ENCODE measurements at regions of chr3 and their contacts with region 1.

Region 1: DNA sequence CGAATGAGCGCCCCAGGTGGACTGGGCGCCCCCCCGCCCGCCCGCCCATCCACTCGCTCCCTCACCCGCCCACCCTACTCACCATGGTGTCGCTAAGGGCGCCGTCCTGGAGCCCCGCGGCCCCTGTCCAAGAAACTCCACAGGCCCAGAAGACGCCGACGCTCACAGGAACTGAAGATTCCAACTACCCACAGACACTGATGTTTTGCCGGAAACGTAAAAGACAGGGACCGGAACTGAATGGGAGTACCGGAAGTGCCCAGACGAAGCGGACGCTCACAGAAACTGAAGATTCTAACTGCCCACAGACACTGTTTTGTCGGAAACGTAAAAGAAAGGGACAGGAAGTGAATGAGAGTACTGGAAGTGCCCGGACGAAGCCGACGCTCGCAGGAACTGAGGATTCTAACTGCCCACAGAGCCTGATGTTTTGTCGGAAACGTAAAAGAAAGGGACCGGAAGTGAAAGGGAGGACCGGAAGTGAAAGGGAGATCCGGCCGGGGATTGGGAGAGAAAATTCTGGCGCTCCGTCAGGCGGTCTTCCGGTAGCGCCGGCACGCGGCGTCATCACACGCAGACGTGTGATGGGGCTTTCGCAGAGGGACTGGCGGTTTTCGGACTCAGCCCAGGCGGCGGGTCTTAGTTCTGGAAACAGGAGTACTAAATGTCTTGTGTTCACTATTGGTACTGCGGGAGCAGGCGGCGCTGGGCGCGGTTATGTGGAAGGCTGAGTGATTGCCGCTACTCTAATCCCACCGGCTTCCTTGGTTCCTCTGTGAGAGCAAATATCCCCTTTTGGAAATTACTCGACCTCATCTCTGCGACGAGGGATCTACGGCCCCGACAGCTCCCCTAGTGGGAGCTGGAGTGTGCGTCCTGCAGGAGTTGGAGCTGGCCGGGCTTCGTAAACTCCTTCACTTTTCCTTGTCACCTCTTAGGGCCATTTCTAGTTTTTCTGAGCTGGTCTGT is at the start of gene ISY1:
- DNase-seq: peak; percentile 93
- ATAC-seq: peak; percentile 81
- H3K4me3 Mint-ChIP-seq: peak within 1 kb of the TSS; percentile 93
- H3K27ac Mint-ChIP-seq: peak within 1 kb of the TSS; percentile 98
- H3K4me1 Mint-ChIP-seq: peaks cover 30% of the 10 kb centered on the region
- H3K27me3 Mint-ChIP-seq: no peaks in the 10 kb centered on the region
- total RNA-seq, gene ISY1: 44.9 to 65.5 TPM

Region 2: GRCh38 chr3:128993461-128994173 is 167.6 kb before region 1 on chr3 and contains the start of gene CFAP92:
- CTCF ChIA-PET with region 1: interaction called, 6 read pairs
- POLR2A ChIA-PET with region 1: interaction called, 8 read pairs
- intact Hi-C with region 1: loop called in 1 of 2 experiments (anchors 1 kb)
- DNase-seq: peak; percentile 95
- ATAC-seq: peak; percentile 97
- H3K4me3 Mint-ChIP-seq: peak within 1 kb of the TSS; percentile 63
- H3K27ac Mint-ChIP-seq: peak within 1 kb of the TSS; percentile 49
- H3K4me1 Mint-ChIP-seq: peaks cover 32% of the 10 kb centered on the region
- H3K27me3 Mint-ChIP-seq: no peaks in the 10 kb centered on the region
- total RNA-seq, gene CFAP92: 0.64 to 0.88 TPM

Region 3: DNA sequence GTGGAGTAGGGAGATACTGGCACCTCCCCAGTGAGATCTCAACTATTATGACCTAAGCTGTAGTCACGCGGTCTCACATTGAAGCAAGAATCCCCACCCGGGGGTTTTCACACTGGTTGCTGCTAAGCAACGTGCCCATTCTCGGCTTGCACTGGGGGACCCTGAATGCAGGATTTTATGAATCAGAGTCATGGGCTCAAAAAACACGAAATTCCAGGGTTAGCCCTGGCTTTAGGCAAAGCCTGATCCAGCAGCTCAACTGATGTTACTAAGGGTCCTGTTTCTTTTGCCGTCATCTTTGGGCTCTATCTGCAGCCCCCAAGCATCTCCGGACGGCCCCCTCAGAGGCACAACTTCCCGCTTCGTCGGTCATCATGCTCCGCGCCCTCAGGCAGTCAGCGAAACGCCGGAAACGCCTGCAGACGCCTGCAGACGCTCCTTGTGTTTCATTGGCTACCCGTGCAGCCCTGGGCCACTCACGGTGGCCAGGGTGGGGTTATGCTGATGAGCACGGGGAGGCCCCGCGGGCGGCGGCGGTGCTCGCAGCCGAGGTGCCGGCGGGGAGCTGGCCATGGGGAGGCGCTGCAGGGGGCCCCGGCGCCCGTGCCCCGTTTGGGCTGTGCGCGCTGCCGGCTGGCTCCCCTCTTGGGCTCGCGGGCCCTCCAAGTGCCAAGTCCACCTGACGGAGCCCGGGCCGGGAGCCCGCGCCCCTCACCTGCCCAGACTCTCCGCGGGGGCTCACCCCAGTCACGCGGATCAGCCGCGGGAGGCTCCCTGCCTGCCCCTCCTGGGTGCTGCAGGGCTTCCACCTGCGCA is 134.2 kb before region 1 on chr3:
- CTCF ChIA-PET with region 1: interaction called, 5 read pairs
- POLR2A ChIA-PET with region 1: interaction called, 6 read pairs
- intact Hi-C with region 1: loop called (anchors 1 kb)
- DNase-seq: peak; percentile 96
- ATAC-seq: peak; percentile 100
- H3K4me3 Mint-ChIP-seq: peak overlapping the region; percentile 72
- H3K27ac Mint-ChIP-seq: peak overlapping the region; percentile 81
- H3K4me1 Mint-ChIP-seq: peaks cover 12% of the 10 kb centered on the region
- H3K27me3 Mint-ChIP-seq: no peaks in the 10 kb centered on the region

Region 4: GRCh38 chr3:129132097-129132866 is 28.9 kb before region 1 on chr3:
- CTCF ChIA-PET with region 1: no interaction called
- POLR2A ChIA-PET with region 1: no interaction called
- intact Hi-C with region 1: no loop called
- DNase-seq: no peak
- ATAC-seq: no peak
- H3K4me3 Mint-ChIP-seq: no peak overlapping the region
- H3K27ac Mint-ChIP-seq: peak overlapping the region; percentile 32
- H3K4me1 Mint-ChIP-seq: peaks cover 10% of the 10 kb centered on the region
- H3K27me3 Mint-ChIP-seq: no peaks in the 10 kb centered on the region

Region 5: GRCh38 chr3:129176051-129176450 is 14.9 kb after region 1 on chr3:
- CTCF ChIA-PET with region 1: interaction called, 49 read pairs
- POLR2A ChIA-PET with region 1: no interaction called
- intact Hi-C with region 1: no loop called
- DNase-seq: no peak
- ATAC-seq: no peak
- H3K4me3 Mint-ChIP-seq: peak overlapping the region; percentile 55
- H3K27ac Mint-ChIP-seq: peak overlapping the region; percentile 67
- H3K4me1 Mint-ChIP-seq: peaks cover 80% of the 10 kb centered on the region
- H3K27me3 Mint-ChIP-seq: no peaks in the 10 kb centered on the region

Region 6: GRCh38 chr3:129278439-129278970 is 117.3 kb after region 1 on chr3 and contains the start of gene HMCES:
- CTCF ChIA-PET with region 1: no interaction called
- POLR2A ChIA-PET with region 1: interaction called, 7 read pairs
- intact Hi-C with region 1: loop called in 1 of 2 experiments (anchors 1 kb)
- DNase-seq: peak; percentile 98
- ATAC-seq: peak; percentile 84
- H3K4me3 Mint-ChIP-seq: peak within 1 kb of the TSS; percentile 89
- H3K27ac Mint-ChIP-seq: peak within 1 kb of the TSS; percentile 95
- H3K4me1 Mint-ChIP-seq: peaks cover 55% of the 10 kb centered on the region
- H3K27me3 Mint-ChIP-seq: no peaks in the 10 kb centered on the region
- total RNA-seq, gene HMCES: 43.1 to 56.7 TPM

Region 7: DNA sequence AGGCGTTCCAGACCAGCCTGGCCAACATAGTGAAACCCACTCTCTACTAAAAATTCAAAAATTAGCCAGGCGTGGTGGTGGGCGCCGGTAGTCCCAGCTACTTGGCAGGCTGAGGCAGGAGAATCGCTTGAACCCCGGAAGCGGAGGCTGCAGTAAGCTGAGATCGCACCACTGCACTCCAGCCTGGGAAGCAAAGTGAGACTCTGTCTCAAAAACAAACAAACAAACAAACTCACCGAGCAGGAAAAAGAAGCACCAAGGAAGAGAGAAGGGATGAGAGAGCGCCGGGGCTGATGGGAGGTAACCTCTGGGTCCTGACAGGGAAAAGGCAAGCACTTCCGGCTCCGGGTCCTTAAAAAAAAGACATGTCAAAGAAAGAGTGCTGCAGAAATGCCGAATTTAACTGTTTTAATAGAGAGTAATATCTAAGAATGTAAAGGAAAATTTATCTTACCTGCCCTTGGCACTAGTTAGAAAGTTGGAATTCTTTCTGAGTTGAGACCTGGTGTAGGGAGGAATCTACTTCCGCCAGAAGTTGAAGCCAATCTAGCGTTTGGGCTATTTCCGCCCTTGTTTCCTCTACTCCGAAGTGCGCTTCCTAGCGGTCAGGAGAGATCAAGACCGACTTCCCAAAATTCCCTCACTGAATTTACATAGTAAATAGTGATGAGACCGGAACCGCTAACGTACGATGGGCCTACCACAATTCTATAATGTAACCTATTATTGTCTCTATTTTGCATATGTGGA is 238.1 kb after region 1 on chr3:
- CTCF ChIA-PET with region 1: no interaction called
- POLR2A ChIA-PET with region 1: no interaction called
- intact Hi-C with region 1: loop called in 1 of 2 experiments (anchors 1 kb)
- DNase-seq: peak; percentile 90
- ATAC-seq: peak; percentile 82
- H3K4me3 Mint-ChIP-seq: peak overlapping the region; percentile 99
- H3K27ac Mint-ChIP-seq: peak overlapping the region; percentile 98
- H3K4me1 Mint-ChIP-seq: peaks cover 29% of the 10 kb centered on the region
- H3K27me3 Mint-ChIP-seq: no peaks in the 10 kb centered on the region